ENCODE measurements at regions of chr1 and their contacts with region 1.

Region 1: DNA sequence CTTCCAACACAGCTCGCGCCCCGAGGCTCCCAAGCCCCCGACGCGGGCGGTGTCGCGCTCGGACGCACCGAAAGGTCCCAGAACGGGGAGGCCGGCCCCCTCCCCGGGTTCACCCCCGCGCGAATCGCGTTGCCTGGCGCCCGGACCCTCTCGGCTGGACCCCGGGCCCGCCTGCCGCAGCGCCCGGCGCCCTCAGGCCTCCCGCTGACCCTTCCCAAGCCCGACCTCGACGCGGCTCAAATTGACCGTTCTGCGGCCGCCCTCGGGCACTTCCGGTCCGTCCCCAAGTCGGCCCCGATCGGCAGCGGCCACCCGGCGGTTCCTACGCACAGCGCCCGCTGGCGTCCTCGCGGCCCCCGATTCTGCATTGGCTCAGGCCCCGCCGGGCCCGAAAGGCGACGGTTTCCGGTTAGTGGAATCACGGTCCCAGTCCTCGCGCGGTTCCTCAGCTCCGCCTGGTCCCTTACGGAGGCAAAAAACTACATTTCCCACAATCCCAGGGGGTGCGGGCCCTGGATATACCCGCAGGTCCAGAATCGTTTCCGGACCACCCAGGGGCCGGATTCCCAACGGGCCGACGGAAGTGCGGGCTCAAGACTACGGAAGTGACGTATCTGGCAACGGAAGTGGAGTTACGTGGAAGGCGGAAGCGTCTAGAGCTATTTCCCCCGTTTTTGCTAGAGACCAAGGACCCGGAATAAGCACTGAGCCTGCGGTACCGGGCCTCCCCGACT is at the start of gene AURKAIP1:
- DNase-seq: peak; percentile 96 to 99
- H3K4me3 ChIP-seq: peak within 1 kb of the TSS; percentile 93 to 100
- H3K27ac ChIP-seq: peak within 1 kb of the TSS; percentile 97 to 98
- H3K4me1 ChIP-seq: peaks cover 23 to 26% of the 10 kb centered on the region in 2 donors
- H3K27me3 ChIP-seq: no peaks in the 10 kb centered on the region
- CTCF ChIP-seq: peak in 2 of 3 experiments; percentile 10 to 32
- total RNA-seq, gene AURKAIP1: 247 TPM

Region 2: DNA sequence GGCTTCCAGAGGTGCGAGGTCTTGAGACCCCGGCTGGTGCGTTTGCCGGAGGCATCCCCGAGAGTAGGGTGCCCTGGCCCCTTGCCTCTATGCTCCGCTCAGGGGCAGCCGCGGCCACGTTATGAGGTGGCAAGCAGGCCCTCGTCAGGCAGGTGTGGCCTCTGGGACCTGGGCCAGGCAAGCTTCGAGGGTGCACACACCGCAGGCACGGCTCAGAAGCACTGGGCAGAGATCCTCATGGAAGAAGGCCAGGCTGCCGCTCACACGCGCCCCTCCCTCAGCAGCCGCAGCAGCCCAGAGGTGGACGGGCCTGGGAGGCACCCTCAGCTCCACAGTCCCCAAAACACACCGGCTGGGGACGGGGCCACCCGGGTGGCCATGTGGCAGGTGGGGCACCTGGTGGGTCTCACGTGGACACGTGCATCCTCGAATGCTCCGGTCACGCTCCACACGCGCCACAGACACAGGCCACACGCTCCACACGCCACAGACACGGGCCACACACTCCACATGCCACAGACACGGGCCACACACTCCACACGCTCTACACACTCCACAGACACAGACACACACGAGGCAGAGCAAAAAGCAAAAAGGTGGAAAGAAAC is 149.8 kb before region 1 on chr1:
- intact Hi-C with region 1: no loop called
- DNase-seq: no peak
- H3K4me3 ChIP-seq: no peak overlapping the region
- H3K27ac ChIP-seq: no peak overlapping the region
- H3K4me1 ChIP-seq: peaks cover 9 to 10% of the 10 kb centered on the region in 2 donors
- H3K27me3 ChIP-seq: no peaks in the 10 kb centered on the region
- CTCF ChIP-seq: no peak

Region 3: DNA sequence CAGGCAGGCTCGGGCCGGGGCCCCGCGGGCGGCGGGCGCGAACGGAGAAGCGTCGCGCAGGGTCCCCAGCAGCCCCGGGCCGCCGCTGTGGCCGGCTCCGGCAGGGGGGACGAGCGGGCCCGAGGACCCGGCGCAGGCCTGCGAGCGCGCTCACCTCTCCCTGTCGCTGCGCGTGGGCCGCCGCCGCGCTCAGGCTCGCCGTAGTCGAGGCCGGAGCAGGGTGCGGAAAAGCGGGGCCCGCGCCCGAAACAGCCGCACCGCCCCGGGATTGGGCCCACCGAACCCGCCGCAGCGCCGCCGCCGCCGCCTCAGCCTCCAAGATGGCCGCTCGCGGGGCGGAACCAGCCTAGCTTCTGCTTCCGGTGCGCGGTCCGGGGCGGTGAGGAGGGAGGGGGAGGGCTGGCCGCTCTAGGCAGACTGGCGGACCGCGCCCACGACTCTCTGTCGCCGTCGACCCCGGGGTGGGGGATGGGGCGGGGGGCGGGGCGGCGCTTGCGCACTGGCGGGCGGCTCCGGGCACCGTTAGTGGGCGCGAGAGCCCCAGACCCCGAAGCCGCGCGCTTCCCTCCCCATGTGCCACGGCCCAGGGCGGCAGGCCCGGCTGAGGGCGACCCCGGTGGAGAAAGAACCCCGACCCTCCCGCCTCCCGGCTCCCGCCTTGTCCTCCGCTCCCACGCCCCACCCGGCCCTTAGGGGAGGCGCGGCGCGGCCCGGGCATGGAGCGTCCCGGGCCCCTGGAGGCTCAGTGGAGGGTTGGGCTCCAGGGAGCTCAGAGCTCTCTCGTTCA is 101.4 kb before region 1 on chr1 and contains the start of gene UBE2J2:
- intact Hi-C with region 1: loop called (anchors 1 kb)
- DNase-seq: peak; percentile 79 to 97
- H3K4me3 ChIP-seq: peak within 1 kb of the TSS; percentile 97 to 98
- H3K27ac ChIP-seq: peak within 1 kb of the TSS; percentile 67 to 76
- H3K4me1 ChIP-seq: peaks cover 29 to 39% of the 10 kb centered on the region in 2 donors
- H3K27me3 ChIP-seq: no peaks in the 10 kb centered on the region
- CTCF ChIP-seq: peak in 1 of 3 experiments; percentile 12
- total RNA-seq, gene UBE2J2: 25.2 TPM

Region 4: GRCh38 chr1:1290238-1290731 is 84.8 kb before region 1 on chr1:
- intact Hi-C with region 1: no loop called
- DNase-seq: no peak
- H3K4me3 ChIP-seq: no peak overlapping the region
- H3K27ac ChIP-seq: no peak overlapping the region
- H3K4me1 ChIP-seq: peaks cover 3 to 4% of the 10 kb centered on the region in 2 donors
- H3K27me3 ChIP-seq: no peaks in the 10 kb centered on the region
- CTCF ChIP-seq: peak; percentile 60 to 70 (median 63)

Region 5: DNA sequence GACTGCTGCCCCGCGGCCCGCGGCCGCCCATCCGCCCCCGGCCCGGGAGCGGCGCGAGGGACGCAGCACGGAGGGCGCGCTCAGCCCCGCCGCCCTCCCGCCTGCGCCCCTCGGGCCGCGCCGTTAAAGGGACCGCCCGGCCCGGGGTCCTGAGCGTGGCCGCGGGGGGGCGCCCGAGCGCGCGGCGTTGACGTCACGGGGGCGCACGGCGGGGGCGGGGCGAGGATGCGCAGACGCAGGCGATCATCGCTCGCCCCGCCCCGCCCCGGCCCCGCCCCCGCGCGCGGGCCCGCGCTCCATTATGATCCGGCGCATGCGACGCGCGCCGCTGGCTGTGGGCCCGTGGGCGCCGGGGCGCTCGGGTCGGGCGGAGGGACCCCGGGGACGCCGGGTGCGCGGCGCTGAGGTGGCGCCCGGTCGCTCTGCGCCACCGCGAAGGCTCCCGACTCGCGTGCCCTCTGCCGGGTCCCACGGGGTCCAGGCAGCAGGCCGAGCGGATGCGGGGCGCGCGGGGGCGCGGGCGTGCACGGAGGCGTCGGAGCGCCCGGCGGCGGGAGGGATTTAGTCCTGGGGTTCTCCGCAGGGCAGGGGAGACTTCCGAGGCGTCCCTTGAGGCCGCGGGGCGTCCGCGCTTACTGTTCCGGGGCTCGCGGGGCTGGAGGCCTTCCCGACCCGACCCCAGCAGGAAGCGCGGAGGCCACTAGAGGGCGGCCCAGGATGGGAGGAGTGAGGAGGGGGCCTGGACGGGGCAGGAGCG is 25.7 kb before region 1 on chr1 and contains the start of gene DVL1:
- intact Hi-C with region 1: loop called (anchors 1 kb)
- DNase-seq: peak in 1 of 2 donors; percentile 83
- H3K4me3 ChIP-seq: peak within 1 kb of the TSS; percentile 91 to 93
- H3K27ac ChIP-seq: peak within 1 kb of the TSS; percentile 69 to 79
- H3K4me1 ChIP-seq: peaks cover 7 to 54% of the 10 kb centered on the region in 2 donors
- H3K27me3 ChIP-seq: no peaks in the 10 kb centered on the region
- CTCF ChIP-seq: peak; percentile 52 to 75 (median 68)
- total RNA-seq, gene DVL1: 66.7 TPM

Region 6: GRCh38 chr1:1399187-1399871 is 24.2 kb after region 1 on chr1 and contains the start of gene CCNL2:
- intact Hi-C with region 1: loop called (anchors 1 kb)
- DNase-seq: peak; percentile 89 to 99
- H3K4me3 ChIP-seq: peak within 1 kb of the TSS; percentile 81 to 92
- H3K27ac ChIP-seq: peak within 1 kb of the TSS; percentile 75 to 80
- H3K4me1 ChIP-seq: peaks cover 10 to 24% of the 10 kb centered on the region in 2 donors
- H3K27me3 ChIP-seq: no peaks in the 10 kb centered on the region
- CTCF ChIP-seq: peak; percentile 64 to 77 (median 70)
- total RNA-seq, gene CCNL2: 150 TPM

Region 7: GRCh38 chr1:1419642-1420384 is 44.7 kb after region 1 on chr1:
- intact Hi-C with region 1: no loop called
- DNase-seq: no peak
- H3K4me3 ChIP-seq: peak overlapping the region; percentile 21 to 48
- H3K27ac ChIP-seq: no peak overlapping the region
- H3K4me1 ChIP-seq: no peaks in the 10 kb centered on the region
- H3K27me3 ChIP-seq: no peaks in the 10 kb centered on the region
- CTCF ChIP-seq: no peak

Region 8: DNA sequence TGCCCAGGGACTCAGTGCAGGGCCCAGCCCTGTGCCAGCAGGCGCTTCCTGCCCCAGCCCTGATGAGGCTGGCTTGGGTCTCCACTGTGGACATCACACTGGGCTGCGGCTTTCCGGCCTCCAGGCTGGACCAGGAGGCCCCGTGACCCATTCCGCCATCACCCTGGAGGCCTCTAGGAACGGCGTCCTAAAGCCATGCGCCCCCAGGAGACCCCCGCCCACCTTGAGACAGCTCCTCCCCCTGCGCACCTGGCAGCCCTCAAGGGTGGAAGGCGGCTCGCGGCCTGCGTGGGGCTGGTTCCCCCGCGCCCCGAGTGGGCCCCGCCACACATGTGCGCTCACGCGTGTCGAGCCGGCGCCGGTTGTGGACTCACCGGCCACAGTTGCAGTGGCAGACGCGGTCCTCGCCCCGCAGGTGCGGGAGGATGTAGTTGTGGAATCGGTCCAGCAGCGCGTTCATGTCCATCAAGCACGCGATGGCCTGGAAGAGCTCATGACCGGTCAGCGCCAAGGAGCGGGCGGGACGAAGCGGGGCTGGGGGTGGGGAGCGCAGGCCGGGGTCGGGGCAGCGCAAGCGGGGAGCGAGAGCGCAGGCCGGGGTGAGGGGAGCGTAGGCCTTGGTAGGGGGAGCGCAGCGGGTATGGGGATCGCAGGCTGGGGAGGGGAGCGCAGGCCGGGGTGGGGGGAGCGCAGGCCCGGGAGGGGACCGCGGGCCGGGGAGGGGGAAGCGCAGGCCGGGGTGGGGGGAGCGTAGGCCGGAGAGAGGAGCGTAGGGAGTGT is 164.4 kb after region 1 on chr1:
- intact Hi-C with region 1: no loop called
- DNase-seq: no peak
- H3K4me3 ChIP-seq: peak overlapping the region; percentile 87 to 91
- H3K27ac ChIP-seq: peak overlapping the region; percentile 75 to 77
- H3K4me1 ChIP-seq: peaks cover 3 to 14% of the 10 kb centered on the region in 2 donors
- H3K27me3 ChIP-seq: no peaks in the 10 kb centered on the region
- CTCF ChIP-seq: no peak

Measured in ascending aorta (tissue), 2 donors.